HCT116 (cell line): ENCODE measurements at regions of chr2 and their contacts with region 1.

Region 1: GRCh38 chr2:231713730-231714430 is 5.6 kb downstream of the PTMA start:
- DNase-seq: peak; percentile 92
- ATAC-seq: peak; percentile 57
- H3K4me3 ChIP-seq: no peak overlapping the region
- H3K27ac ChIP-seq: peak overlapping the region; percentile 68
- H3K4me1 ChIP-seq: peaks cover 27 to 70% of the 10 kb centered on the region in 2 experiments
- H3K27me3 ChIP-seq: no peaks in the 10 kb centered on the region
- CTCF ChIP-seq: peak in 2 of 3 experiments; percentile 88 to 91; a peak in 4 of 6 replicates
- POLR2A ChIP-seq: no peak
- RAD21 ChIP-seq: no peak

Region 2: DNA sequence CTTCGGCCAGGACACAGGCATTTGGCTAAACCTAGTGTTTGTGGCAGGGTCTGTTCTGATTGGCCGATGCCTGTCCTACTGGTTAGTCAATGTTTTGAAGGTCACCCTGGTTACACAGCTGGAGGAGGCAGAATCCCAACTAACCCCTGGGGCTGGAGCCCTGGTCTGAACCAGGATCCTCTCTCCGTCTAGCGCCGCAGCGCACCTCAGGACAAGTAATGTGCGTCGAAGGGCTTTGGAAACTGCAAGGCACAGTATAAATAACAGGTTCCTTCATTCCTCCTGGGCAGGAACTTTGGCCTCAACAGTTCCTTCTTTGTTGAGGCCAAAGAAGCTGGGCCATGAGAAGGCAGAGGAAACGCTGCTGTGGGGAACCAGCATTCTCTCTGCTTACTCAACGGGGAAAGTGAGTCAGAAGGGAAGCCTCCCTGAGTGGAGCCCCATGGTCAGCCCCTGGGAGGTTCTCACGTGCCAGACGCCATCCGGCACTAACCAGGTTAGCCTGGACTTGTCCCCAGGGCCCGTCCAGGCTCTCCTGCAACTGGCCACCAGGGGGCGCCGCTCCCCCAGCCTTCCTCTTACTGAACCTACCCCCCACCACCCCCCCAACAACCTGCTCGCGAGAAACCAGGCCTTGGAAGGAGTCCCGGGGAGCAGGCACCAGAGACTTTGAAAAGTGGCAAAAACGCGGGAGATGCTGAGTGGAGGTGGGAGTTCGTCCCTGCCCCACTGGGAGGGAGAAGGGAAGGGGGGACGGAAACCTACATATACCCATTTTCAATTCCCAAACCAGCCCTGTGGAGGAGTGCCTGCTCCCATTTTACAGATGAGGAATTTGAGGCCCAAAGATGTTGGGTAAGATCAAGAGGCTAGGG is 101.5 kb before region 1 on chr2:
- CTCF ChIA-PET with region 1: interaction called, 80 read pairs
- POLR2A ChIA-PET with region 1: interaction called, 13 read pairs
- RAD21 ChIA-PET with region 1: interaction called, 7 to 9 read pairs
- intact Hi-C with region 1: loop called (anchors 1 kb)
- DNase-seq: peak; percentile 88
- ATAC-seq: peak; percentile 66
- H3K4me3 ChIP-seq: peak overlapping the region; percentile 18 to 34
- H3K27ac ChIP-seq: peak overlapping the region; percentile 99
- H3K4me1 ChIP-seq: peaks cover 54 to 68% of the 10 kb centered on the region in 2 experiments
- H3K27me3 ChIP-seq: no peaks in the 10 kb centered on the region
- CTCF ChIP-seq: peak in 2 of 3 experiments; percentile 90 to 96; a peak in 4 of 6 replicates
- POLR2A ChIP-seq: no peak
- RAD21 ChIP-seq: no peak

Region 3: GRCh38 chr2:231662028-231662810 is 51.7 kb before region 1 on chr2:
- CTCF ChIA-PET with region 1: interaction called, 19 read pairs
- POLR2A ChIA-PET with region 1: interaction called, 11 read pairs
- RAD21 ChIA-PET with region 1: no interaction called
- intact Hi-C with region 1: no loop called
- DNase-seq: peak; percentile 97
- ATAC-seq: peak; percentile 58
- H3K4me3 ChIP-seq: peak overlapping the region; percentile 56 to 62
- H3K27ac ChIP-seq: peak overlapping the region; percentile 99
- H3K4me1 ChIP-seq: peaks cover 25 to 75% of the 10 kb centered on the region in 2 experiments
- H3K27me3 ChIP-seq: no peaks in the 10 kb centered on the region
- CTCF ChIP-seq: no peak
- POLR2A ChIP-seq: no peak
- RAD21 ChIP-seq: no peak

Region 4: GRCh38 chr2:231687133-231687852 is 26.6 kb before region 1 on chr2:
- CTCF ChIA-PET with region 1: interaction called, 41 read pairs
- POLR2A ChIA-PET with region 1: interaction called, 8 read pairs
- RAD21 ChIA-PET with region 1: no interaction called
- intact Hi-C with region 1: no loop called
- DNase-seq: no peak
- ATAC-seq: peak; percentile 89
- H3K4me3 ChIP-seq: peak overlapping the region; percentile 10 to 26; a peak in 2 of 4 replicates
- H3K27ac ChIP-seq: peak overlapping the region; percentile 73
- H3K4me1 ChIP-seq: peaks cover 22 to 33% of the 10 kb centered on the region in 2 experiments
- H3K27me3 ChIP-seq: no peaks in the 10 kb centered on the region
- CTCF ChIP-seq: peak in 2 of 3 experiments; percentile 73 to 88; a peak in 4 of 6 replicates
- POLR2A ChIP-seq: peak; percentile 39
- RAD21 ChIP-seq: no peak